ENCODE measurements at regions of chr4 and their contacts with region 1.

Region 1: DNA sequence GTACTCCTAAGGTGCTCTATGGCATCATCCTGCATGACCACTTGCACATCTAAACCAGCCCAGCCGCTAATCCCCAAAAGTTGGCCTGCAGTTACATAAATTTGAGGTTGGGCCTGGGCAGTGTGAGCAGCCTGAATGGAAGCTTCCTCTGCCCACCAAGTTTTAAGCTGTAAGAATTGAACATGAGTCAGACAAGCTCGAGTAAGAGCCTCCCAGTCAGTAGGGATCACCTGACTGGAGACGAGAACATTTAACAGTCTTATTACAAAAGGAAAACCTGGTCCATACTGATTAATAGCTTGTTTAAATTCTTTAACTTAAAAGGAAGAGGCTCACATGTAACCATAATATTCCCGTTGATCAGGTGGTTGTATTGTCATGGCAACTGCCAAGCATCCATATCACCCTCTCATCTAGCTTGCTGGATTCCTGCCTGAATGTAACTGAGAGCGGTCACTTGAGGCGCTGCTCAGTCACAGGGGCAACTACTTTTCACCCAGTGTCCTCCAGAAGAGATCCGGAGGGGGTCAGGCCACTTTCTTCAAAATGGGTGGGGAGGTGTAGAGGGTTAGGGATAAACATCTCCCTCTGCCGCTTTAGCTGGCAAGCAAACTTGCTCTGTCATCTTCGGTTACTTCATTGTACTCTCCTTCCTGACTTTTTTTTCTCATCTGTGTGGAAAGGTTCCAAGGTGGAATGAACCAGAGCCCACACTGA is 56.6 kb upstream of the WDR1 start:
- DNase-seq: peak; percentile 24
- H3K4me3 Mint-ChIP-seq: no peak overlapping the region
- H3K27ac Mint-ChIP-seq: no peak overlapping the region
- H3K4me1 Mint-ChIP-seq: no peaks in the 10 kb centered on the region
- H3K27me3 Mint-ChIP-seq: no peaks in the 10 kb centered on the region
- CTCF ChIP-seq: no peak

Region 2: DNA sequence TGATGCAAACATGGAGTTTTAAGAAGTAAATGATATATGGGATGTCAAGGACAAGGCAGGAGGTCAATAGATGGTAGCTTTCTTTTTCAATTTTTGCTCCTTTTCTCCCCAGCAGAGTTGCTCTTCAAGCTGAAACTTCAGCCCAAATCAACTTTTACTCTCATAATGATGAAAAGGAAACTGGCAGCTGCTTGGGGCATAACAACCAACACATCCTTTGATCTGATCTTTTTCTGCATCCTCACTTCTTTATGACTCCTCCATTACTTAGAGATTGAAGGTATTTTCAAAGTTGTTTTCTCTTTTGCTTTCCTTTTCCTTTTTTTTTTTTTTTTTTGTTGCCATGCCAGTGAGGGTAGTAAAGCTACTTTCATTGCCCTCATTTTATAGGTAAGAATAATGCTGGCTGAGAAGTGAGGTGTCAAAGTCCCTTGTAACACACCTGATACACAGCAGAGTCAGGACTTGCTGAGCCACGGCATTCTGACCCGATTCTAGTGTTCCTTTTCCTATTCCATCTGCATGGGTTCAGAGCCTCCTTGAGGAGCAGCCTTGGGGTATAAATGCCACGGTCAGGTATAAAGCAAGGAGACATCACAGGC is 178.8 kb before region 1 on chr4:
- CTCF ChIA-PET with region 1: no interaction called
- POLR2A ChIA-PET with region 1: no interaction called
- intact Hi-C with region 1: no loop called
- DNase-seq: no peak
- H3K4me3 Mint-ChIP-seq: no peak overlapping the region
- H3K27ac Mint-ChIP-seq: no peak overlapping the region
- H3K4me1 Mint-ChIP-seq: peaks cover 7% of the 10 kb centered on the region
- H3K27me3 Mint-ChIP-seq: no peaks in the 10 kb centered on the region
- CTCF ChIP-seq: no peak

Region 3: DNA sequence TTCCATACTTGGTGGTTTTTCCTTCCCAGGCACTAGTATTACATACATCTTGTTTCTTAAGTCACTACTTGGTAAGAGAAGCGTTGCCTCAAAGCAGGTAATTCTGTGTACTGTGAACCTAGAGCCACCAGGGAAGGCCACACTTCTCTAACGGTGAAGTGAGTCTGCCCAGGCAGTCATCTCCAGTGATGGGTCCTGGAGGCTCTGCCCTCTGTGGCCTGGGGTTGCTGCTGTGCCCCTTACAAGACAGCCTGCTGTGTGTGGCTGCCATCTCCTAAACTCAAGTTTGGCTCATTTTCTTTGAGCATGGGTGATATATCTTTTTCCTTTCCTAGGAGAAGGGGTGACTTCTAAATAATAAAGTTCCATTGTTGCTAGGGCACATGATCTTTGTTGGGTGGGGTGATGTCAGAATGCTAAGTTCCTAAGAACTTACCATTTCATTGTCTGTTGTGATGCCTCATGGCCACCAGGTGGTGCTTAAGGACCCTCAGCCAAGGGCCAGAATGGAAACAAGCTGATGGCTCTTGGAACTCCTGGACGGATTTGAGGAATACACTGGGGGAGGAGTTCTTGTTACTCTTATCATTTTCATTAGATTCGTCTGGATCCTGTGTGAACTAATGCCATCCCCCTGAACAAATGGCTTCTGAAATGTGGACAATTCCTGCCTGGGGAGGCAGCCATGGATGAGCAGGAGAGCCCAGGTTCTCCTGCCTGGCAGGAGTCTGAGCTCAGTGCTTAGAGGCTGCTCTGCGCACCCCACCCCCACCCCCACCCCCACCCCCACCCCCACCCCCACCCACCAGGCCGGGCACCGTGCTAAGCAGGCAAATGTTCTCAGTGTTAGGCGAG is 15.5 kb before region 1 on chr4:
- CTCF ChIA-PET with region 1: interaction called, 27 read pairs
- POLR2A ChIA-PET with region 1: no interaction called
- intact Hi-C with region 1: no loop called
- DNase-seq: peak; percentile 72
- H3K4me3 Mint-ChIP-seq: no peak overlapping the region
- H3K27ac Mint-ChIP-seq: no peak overlapping the region
- H3K4me1 Mint-ChIP-seq: peaks cover 6% of the 10 kb centered on the region
- H3K27me3 Mint-ChIP-seq: no peaks in the 10 kb centered on the region
- CTCF ChIP-seq: peak; percentile 55

Measured in MCF 10A (cell line).